ENCODE measurements at regions of chr1 and their contacts with region 1.

Region 1: GRCh38 chr1:56390227-56390867 is 189.0 kb downstream of the PLPP3 start:
- DNase-seq: no peak
- ATAC-seq: no peak
- H3K4me3 ChIP-seq: no peak overlapping the region
- H3K27ac ChIP-seq: peak overlapping the region in 2 of 10 donors; percentile 34 to 47
- H3K4me1 ChIP-seq: peaks cover 2 to 16% (median 6%) of the 10 kb centered on the region in 9 donors
- H3K27me3 ChIP-seq: no peaks in the 10 kb centered on the region
- CTCF ChIP-seq: no peak

Region 2: GRCh38 chr1:55584526-55585401 is 805.6 kb before region 1 on chr1:
- intact Hi-C with region 1: loop called in 1 of 10 experiments (anchors 10 kb)
- DNase-seq: no peak
- ATAC-seq: peak in 4 of 8 donors; percentile 21 to 30 (median 26)
- H3K4me3 ChIP-seq: no peak overlapping the region
- H3K27ac ChIP-seq: peak overlapping the region in 1 of 10 donors; percentile 1
- H3K4me1 ChIP-seq: peaks cover 0 to 26% (median 4%) of the 10 kb centered on the region in 9 donors
- H3K27me3 ChIP-seq: no peaks in the 10 kb centered on the region
- CTCF ChIP-seq: peak in 1 of 9 donors; percentile 13

Measured in heart right ventricle (tissue), 16 donors.